Tibial artery (tissue), 4 donors: ENCODE measurements at regions of chr17 and their contacts with region 1.

Region 1: GRCh38 chr17:78497115-78497540 is 80.1 kb downstream of the DNAH17 start:
- DNase-seq: peak; percentile 69 to 78
- H3K4me3 ChIP-seq: no peak overlapping the region
- H3K27ac ChIP-seq: no peak overlapping the region
- H3K4me1 ChIP-seq: no peaks in the 10 kb centered on the region
- H3K27me3 ChIP-seq: peaks cover 0 to 17% of the 10 kb centered on the region in 2 donors
- CTCF ChIP-seq: peak; percentile 81 to 82

Region 2: GRCh38 chr17:77857613-77858012 is 639.5 kb before region 1 on chr17:
- intact Hi-C with region 1: no loop called
- DNase-seq: no peak
- H3K4me3 ChIP-seq: no peak overlapping the region
- H3K27ac ChIP-seq: no peak overlapping the region
- H3K4me1 ChIP-seq: peaks cover 0 to 7% (median 4%) of the 10 kb centered on the region in 4 donors
- H3K27me3 ChIP-seq: peaks cover 0 to 4% of the 10 kb centered on the region in 2 donors
- CTCF ChIP-seq: no peak

Region 3: DNA sequence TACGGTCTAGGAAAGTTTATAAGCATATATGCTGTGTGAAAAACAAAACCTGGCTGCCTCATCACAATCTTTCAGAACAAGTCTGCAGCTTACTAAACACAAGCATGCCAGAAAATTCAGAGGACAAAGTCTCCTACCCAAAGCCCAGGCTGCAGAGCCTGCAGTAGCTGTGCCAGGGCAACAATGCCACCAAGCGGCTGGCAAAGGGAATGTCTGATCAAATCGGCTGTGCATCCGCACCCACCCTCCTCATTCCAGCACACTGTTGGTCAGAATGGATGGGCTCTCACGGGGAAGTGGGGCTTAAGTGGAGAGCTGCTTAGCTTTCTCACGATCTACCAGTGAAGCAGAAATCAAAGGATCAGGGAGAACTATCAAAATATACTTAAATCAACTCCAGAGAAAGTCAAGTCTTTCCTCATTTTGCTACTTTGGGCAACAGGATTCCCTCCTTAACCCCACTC is 211.4 kb after region 1 on chr17:
- intact Hi-C with region 1: loop called (anchors 5 kb)
- DNase-seq: peak; percentile 58 to 76
- H3K4me3 ChIP-seq: no peak overlapping the region
- H3K27ac ChIP-seq: no peak overlapping the region
- H3K4me1 ChIP-seq: no peaks in the 10 kb centered on the region
- H3K27me3 ChIP-seq: no peaks in the 10 kb centered on the region
- CTCF ChIP-seq: peak; percentile 83

Region 4: DNA sequence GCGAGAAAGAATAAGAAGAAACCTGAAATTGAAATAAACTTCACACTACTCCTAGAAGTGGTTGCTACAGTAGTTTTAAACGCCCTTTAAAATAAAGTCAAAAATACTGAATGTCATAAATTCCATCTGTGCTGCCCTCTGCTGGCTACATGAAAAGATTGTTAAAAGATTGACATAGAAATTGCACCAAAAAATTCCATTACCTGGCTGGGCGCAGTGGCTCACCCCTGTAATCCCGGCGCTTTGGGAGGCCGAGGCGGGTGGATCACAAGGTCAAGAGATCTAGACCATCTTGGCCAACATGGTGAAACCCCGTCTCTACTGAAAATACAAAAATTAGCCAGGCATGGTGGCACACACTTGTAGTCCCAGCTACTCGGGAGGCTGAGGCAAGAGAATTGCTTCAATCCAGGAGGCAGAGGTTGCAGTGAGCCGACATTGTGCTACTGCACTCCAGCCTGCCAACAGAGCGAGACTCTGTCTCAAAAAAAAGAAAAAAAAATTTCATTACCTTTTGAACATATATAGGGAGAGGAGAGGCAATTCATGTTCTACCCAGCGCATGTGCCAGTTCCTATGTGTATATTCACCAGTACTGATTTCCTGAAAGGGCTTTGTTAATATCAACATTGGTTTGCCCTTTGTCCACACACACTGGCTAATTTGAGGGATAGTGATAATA is 248.4 kb after region 1 on chr17:
- intact Hi-C with region 1: loop called (anchors 10 kb)
- DNase-seq: no peak
- H3K4me3 ChIP-seq: no peak overlapping the region
- H3K27ac ChIP-seq: no peak overlapping the region
- H3K4me1 ChIP-seq: peaks cover 0 to 14% (median 6%) of the 10 kb centered on the region in 4 donors
- H3K27me3 ChIP-seq: no peaks in the 10 kb centered on the region
- CTCF ChIP-seq: peak; percentile 55 to 66